ENCODE measurements at regions of chr11 and their contacts with region 1.

Region 1: GRCh38 chr11:118488480-118489109 is 38.7 kb upstream of the TTC36 start:
- DNase-seq: peak; percentile 27 to 43
- ATAC-seq: peak; percentile 65 to 79
- H3K4me3 ChIP-seq: no peak overlapping the region
- H3K27ac ChIP-seq: peak overlapping the region in 1 of 4 donors; percentile 25
- H3K4me1 ChIP-seq: peaks cover 0 to under 1% of the 10 kb centered on the region in 2 donors
- H3K27me3 ChIP-seq: no peaks in the 10 kb centered on the region
- CTCF ChIP-seq: peak; percentile 69 to 81 (median 78)
- POLR2A ChIP-seq: no peak

Region 2: DNA sequence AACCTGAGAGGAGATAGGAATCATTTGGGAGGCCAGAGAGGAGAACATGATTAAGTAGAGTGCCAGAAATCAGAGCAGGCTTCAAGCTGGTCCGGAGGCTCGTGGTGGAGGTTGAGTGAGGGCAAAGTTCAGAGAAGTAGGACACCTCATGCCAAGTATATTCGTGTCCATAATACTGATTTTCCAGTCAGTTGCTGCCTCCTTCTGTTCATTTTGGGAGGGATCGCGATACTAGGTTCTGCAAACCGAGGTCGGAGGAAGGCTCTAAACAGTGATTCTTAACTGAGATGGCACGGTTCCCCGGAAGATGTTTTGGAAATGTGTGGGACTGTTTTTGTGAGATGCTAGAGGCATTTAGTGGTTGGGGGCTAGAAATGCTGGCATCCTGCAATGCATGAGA is 197.7 kb before region 1 on chr11:
- in situ Hi-C with region 1: no loop called
- intact Hi-C with region 1: loop called (anchors 10 kb)
- DNase-seq: no peak
- ATAC-seq: no peak
- H3K4me3 ChIP-seq: no peak overlapping the region
- H3K27ac ChIP-seq: no peak overlapping the region
- H3K4me1 ChIP-seq: no peaks in the 10 kb centered on the region
- H3K27me3 ChIP-seq: no peaks in the 10 kb centered on the region
- CTCF ChIP-seq: peak in 1 of 5 experiments; percentile 16
- POLR2A ChIP-seq: no peak

Region 3: GRCh38 chr11:118374729-118375128 is 113.9 kb before region 1 on chr11:
- in situ Hi-C with region 1: loop called in 1 of 4 experiments (anchors 25 kb)
- intact Hi-C with region 1: loop called (anchors 5 kb)
- DNase-seq: no peak
- ATAC-seq: no peak
- H3K4me3 ChIP-seq: no peak overlapping the region
- H3K27ac ChIP-seq: no peak overlapping the region
- H3K4me1 ChIP-seq: peaks cover 7 to 10% of the 10 kb centered on the region in 2 donors
- H3K27me3 ChIP-seq: no peaks in the 10 kb centered on the region
- CTCF ChIP-seq: no peak
- POLR2A ChIP-seq: no peak

Measured in gastrocnemius medialis (tissue), 4 donors.